Prostate gland (tissue), 2 donors: ENCODE measurements at regions of chr15 and their contacts with region 1.

Region 1: DNA sequence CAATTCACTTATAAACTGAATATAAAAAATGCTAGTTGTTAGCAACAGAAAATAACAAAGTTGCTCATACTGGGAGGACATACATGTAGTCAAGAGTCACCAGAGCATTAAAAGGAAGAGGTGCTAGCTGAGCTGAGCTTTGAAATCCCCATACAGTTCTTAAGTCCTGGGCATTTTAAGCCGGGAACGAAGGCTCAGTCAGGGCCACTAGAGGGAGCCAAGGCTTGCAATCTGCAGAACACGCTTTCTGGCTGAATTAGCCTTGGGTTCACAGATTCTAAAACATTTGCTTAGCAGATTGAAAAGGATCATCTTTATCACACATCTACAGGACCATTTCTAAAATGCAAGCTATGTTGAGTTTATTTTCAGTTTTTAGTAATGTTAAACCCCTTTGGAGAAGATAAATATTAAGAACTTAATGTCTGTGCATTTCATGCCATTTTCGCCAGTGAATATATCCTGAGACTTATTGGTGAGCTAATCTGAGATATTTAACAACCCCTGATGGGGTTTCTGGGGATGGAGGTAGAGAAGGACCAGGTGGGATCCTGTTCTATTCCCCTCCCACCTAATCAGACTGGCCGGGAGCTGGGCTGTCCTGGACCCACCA is 26.3 kb upstream of the MNS1 start:
- DNase-seq: peak; percentile 47
- H3K4me3 ChIP-seq: no peak overlapping the region
- H3K27ac ChIP-seq: no peak overlapping the region
- H3K4me1 ChIP-seq: no peaks in the 10 kb centered on the region
- H3K27me3 ChIP-seq: no peaks in the 10 kb centered on the region
- CTCF ChIP-seq: peak; percentile 21 to 61 (median 48)
- POLR2A ChIP-seq: no peak

Region 2: GRCh38 chr15:57218826-57219576 is 727.8 kb after region 1 on chr15:
- intact Hi-C with region 1: loop called (anchors 5 kb)
- DNase-seq: no peak
- H3K4me3 ChIP-seq: no peak overlapping the region
- H3K27ac ChIP-seq: no peak overlapping the region
- H3K4me1 ChIP-seq: no peaks in the 10 kb centered on the region
- H3K27me3 ChIP-seq: no peaks in the 10 kb centered on the region
- CTCF ChIP-seq: no peak
- POLR2A ChIP-seq: no peak

Region 3: DNA sequence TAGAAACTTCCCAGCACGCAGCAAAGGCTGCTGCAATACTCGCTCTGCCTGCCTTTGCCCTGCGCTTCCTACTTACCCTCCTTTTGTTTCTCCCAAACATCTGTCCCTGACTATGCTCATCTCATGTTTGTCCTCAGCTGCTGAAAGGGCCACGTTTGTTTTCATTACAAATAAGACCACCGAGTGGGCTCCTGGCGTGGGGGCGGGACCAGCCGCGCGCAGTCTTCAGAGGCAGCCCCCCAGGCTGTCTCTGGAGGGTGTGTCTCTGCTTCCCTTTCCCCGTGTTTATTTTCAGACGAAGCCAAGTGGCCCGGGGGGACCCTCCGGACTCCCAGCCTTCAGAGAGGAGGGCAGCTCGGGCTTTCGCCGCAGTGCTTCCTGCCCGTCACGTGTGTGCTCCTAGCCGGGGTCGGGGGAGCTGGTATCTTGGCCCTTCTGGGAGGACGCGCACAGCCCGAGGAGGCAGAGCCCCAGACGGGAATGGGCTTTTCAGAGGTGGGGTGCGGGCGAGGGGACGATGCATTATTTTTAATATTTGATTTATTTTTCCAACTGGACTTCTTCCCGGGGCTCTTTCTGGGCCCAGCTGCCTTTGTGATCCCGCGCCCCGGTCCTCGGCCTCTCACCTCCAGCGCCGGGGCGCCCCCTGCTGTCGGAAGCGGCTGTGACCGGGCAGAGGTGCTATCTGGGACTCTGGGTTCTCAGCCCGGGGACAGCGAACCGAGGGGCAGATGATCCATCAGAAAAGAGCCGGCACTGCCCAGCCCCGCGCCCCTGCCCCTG is 815.1 kb after region 1 on chr15:
- intact Hi-C with region 1: loop called (anchors 5 kb)
- DNase-seq: peak; percentile 78
- H3K4me3 ChIP-seq: peak overlapping the region; percentile 30 to 34
- H3K27ac ChIP-seq: peak overlapping the region; percentile 65 to 79
- H3K4me1 ChIP-seq: peaks cover 10% of the 10 kb centered on the region
- H3K27me3 ChIP-seq: no peaks in the 10 kb centered on the region
- CTCF ChIP-seq: peak; percentile 63 to 83 (median 74)
- POLR2A ChIP-seq: no peak

Region 4: DNA sequence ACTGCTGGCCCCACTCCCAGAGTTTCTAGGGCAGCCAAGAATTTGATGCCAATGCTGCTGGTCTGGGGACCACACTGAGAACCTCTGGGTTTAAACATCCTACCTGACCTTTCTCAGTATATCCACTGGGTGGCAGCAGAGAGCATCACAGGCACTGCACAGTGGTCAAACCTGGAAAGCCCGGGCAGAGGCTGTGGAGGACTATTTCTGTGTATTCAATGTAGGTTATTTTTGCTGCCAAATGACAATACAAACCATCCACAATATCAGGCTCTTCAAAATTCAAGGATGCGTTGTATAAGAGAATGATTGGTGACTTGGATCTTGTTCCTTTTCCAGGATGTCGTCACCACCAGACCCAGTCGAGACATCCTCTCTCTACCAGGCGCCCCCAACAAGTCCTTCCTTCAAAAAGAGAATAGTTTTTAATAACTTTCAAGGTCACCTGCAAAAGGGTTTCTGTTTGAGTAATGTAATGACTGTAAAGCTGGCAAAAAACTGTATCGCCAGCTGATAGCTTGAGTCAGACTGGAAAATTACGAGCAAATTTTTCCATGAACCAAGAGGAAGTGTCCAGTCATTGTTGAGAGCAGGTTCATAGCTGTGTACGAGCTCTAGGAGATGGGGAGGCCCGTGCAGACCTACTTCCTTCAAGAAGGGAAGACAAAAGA is 1070.0 kb after region 1 on chr15:
- intact Hi-C with region 1: loop called (anchors 10 kb)
- DNase-seq: peak; percentile 78
- H3K4me3 ChIP-seq: no peak overlapping the region
- H3K27ac ChIP-seq: no peak overlapping the region
- H3K4me1 ChIP-seq: no peaks in the 10 kb centered on the region
- H3K27me3 ChIP-seq: no peaks in the 10 kb centered on the region
- CTCF ChIP-seq: peak; percentile 73 to 94 (median 92)
- POLR2A ChIP-seq: no peak